GM12878 (cell line): ENCODE measurements at regions of chr11 and their contacts with region 1.

Region 1: GRCh38 chr11:73554671-73555320 is 43.1 kb downstream of the FAM168A start:
- DNase-seq: no peak
- ATAC-seq: peak; percentile 34
- H3K4me3 ChIP-seq: no peak overlapping the region
- H3K27ac ChIP-seq: no peak overlapping the region
- H3K4me1 ChIP-seq: no peaks in the 10 kb centered on the region
- H3K27me3 ChIP-seq: no peaks in the 10 kb centered on the region
- CTCF ChIP-seq: no peak
- EP300 ChIP-seq: no peak
- POLR2A ChIP-seq: no peak
- RAD21 ChIP-seq: no peak

Region 2: DNA sequence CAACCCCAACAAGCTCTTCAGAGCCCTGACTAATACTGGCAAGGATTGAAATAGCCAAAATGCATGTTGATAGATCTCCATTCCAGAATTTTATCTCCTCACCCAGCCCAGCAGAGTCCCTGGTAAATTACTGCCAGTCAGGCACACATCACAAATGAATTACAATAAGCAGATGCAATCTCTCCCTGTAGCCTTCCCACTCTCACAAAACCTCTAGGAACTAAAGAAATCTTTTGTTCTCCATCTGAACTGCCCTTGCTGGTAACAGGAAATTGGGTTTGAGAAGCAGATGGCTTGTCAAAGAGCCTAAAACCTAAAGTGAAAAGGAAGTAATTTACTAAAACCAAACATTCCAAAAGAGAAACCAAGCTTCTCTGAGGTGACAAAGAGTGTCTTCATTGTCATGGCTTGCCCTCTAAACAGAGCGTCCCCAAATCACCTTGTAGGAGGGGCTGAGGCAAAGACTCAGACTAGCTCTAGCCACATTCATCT is 16.4 kb before region 1 on chr11:
- CTCF ChIA-PET with region 1: interaction called, 3 read pairs
- POLR2A ChIA-PET with region 1: interaction called, 4 read pairs
- RAD21 ChIA-PET with region 1: no interaction called
- SMC1A ChIA-PET with region 1: interaction called, 10 read pairs
- in situ Hi-C with region 1: no loop called
- intact Hi-C with region 1: no loop called
- DNase-seq: peak; percentile 53
- ATAC-seq: peak; percentile 98
- H3K4me3 ChIP-seq: 0 out of 2 replicates have a peak overlapping the region, but pooled peaks have one; percentile 0
- H3K27ac ChIP-seq: peak overlapping the region; percentile 76
- H3K4me1 ChIP-seq: peaks cover 13% of the 10 kb centered on the region
- H3K27me3 ChIP-seq: no peaks in the 10 kb centered on the region
- CTCF ChIP-seq: no peak
- EP300 ChIP-seq: no peak
- POLR2A ChIP-seq: no peak
- RAD21 ChIP-seq: no peak

Region 3: DNA sequence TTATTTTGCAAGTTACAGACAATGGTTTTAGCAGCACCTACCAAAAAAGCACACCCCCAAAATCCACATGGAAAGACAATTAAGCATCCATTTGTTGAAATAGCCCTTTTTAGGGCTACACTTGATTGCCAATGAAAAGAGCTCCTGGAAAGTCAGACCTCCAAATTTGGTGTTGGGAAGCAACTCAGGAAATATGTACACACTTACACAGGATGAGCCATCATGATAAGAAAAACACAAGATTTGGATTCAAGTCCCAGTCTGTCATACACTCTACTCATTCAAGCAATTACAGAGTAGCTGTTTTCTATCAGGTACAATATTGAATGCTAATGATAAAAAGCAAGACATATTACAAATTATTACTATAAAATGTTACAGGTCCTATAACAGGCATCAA is 11.6 kb after region 1 on chr11:
- CTCF ChIA-PET with region 1: interaction called, 4 read pairs
- POLR2A ChIA-PET with region 1: interaction called, 3 read pairs
- RAD21 ChIA-PET with region 1: no interaction called
- SMC1A ChIA-PET with region 1: interaction called, 11 read pairs
- in situ Hi-C with region 1: no loop called
- intact Hi-C with region 1: no loop called
- DNase-seq: no peak
- ATAC-seq: no peak
- H3K4me3 ChIP-seq: no peak overlapping the region
- H3K27ac ChIP-seq: no peak overlapping the region
- H3K4me1 ChIP-seq: peaks cover 5% of the 10 kb centered on the region; the same call in 1 of the 2 replicates
- H3K27me3 ChIP-seq: no peaks in the 10 kb centered on the region
- CTCF ChIP-seq: no peak
- EP300 ChIP-seq: no peak
- POLR2A ChIP-seq: no peak
- RAD21 ChIP-seq: no peak